H1 (cell line): ENCODE measurements at regions of chr6 and their contacts with region 1.

Region 1: GRCh38 chr6:150967910-150968309 is 102.4 kb downstream of the MTHFD1L start:
- DNase-seq: no peak
- H3K4me3 ChIP-seq: no peak overlapping the region
- H3K27ac ChIP-seq: no peak overlapping the region
- H3K4me1 ChIP-seq: no peaks in the 10 kb centered on the region; a peak in 1 of 7 replicates
- H3K27me3 ChIP-seq: no peaks in the 10 kb centered on the region
- CTCF ChIP-seq: no peak
- EP300 ChIP-seq: no peak
- POLR2A ChIP-seq: no peak
- RAD21 ChIP-seq: no peak

Region 2: GRCh38 chr6:150979826-150980350 is 12.0 kb after region 1 on chr6:
- CTCF ChIA-PET with region 1: interaction called, 10 read pairs
- POLR2A ChIA-PET with region 1: interaction called, 3 read pairs
- DNase-seq: no peak
- H3K4me3 ChIP-seq: no peak overlapping the region
- H3K27ac ChIP-seq: no peak overlapping the region
- H3K4me1 ChIP-seq: no peaks in the 10 kb centered on the region; a peak in 1 of 7 replicates
- H3K27me3 ChIP-seq: no peaks in the 10 kb centered on the region
- CTCF ChIP-seq: no peak
- EP300 ChIP-seq: no peak
- POLR2A ChIP-seq: no peak
- RAD21 ChIP-seq: no peak

Region 3: GRCh38 chr6:151240791-151241642 is 273.1 kb after region 1 on chr6:
- CTCF ChIA-PET with region 1: no interaction called
- POLR2A ChIA-PET with region 1: no interaction called
- DNase-seq: peak in 1 of 2 experiments; percentile 73
- H3K4me3 ChIP-seq: peak overlapping the region; percentile 61 to 97 (median 92)
- H3K27ac ChIP-seq: no peak overlapping the region
- H3K4me1 ChIP-seq: peaks cover 3 to 12% (median 9%) of the 10 kb centered on the region in 4 experiments; a peak in 6 of 7 replicates
- H3K27me3 ChIP-seq: 0 out of 7 replicates have a peak, but pooled peaks cover 0 to 3% (median 0%) of the 10 kb centered on the region in 4 experiments
- CTCF ChIP-seq: peak in 1 of 3 experiments; percentile 3; a peak in 1 of 4 replicates
- EP300 ChIP-seq: no peak
- POLR2A ChIP-seq: peak in 1 of 2 experiments; percentile 64; a peak in 2 of 3 replicates
- RAD21 ChIP-seq: peak in 1 of 2 experiments; percentile 10; a peak in 1 of 4 replicates